ENCODE measurements at regions of chr7 and their contacts with region 1.

Region 1: DNA sequence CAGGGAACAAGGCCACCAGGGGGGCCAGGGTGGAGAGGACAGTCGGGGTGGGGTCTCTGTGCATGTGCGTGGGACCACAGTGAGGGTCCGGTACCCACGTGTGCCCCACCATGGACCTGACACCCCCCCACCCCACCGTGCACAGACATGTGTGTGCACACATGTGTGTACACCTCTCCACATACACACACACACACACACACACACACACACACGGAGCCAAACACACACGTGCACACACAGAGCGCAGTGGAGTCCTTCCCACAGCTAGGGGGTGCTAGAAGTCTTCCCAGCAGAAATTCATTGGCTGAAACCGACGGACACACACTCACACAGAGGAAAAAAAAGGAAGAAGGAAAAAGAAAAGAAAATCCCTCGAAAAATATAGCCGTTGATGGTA is 42.8 kb upstream of the GNA12 start:
- DNase-seq: no peak
- ATAC-seq: peak; percentile 88
- H3K4me3 Mint-ChIP-seq: no peak overlapping the region
- H3K27ac Mint-ChIP-seq: no peak overlapping the region
- H3K4me1 Mint-ChIP-seq: peaks cover 7% of the 10 kb centered on the region
- H3K27me3 Mint-ChIP-seq: no peaks in the 10 kb centered on the region
- CTCF ChIP-seq: no peak

Region 2: DNA sequence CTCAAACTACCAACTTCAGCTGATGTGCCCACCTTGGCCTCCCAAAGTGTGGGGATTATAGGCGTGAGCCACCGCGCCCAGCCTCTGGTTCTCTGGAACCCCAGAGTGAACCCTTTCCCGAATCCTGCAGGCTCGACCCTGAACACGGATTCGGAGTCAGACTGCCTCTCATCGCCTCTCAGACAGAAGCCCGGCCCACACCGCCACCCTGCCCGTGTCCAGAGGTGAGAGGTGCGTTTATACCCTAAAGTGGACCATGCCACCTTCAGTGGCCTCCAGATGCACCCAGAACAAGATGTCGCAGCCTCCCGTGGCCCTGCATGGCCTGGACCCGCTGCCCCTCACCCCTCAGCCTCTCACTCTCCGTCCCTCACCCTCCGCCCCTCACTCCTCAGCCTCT is 22.1 kb after region 1 on chr7:
- CTCF ChIA-PET with region 1: interaction called, 4 read pairs
- POLR2A ChIA-PET with region 1: interaction called, 10 read pairs
- intact Hi-C with region 1: no loop called
- DNase-seq: no peak
- ATAC-seq: no peak
- H3K4me3 Mint-ChIP-seq: no peak overlapping the region
- H3K27ac Mint-ChIP-seq: peak overlapping the region; percentile 66
- H3K4me1 Mint-ChIP-seq: peaks cover 5% of the 10 kb centered on the region
- H3K27me3 Mint-ChIP-seq: no peaks in the 10 kb centered on the region
- CTCF ChIP-seq: no peak

Region 3: GRCh38 chr7:2939193-2939885 is 52.4 kb after region 1 on chr7:
- CTCF ChIA-PET with region 1: no interaction called
- POLR2A ChIA-PET with region 1: interaction called, 13 read pairs
- intact Hi-C with region 1: no loop called
- DNase-seq: no peak
- ATAC-seq: no peak
- H3K4me3 Mint-ChIP-seq: no peak overlapping the region
- H3K27ac Mint-ChIP-seq: no peak overlapping the region
- H3K4me1 Mint-ChIP-seq: peaks cover 11% of the 10 kb centered on the region
- H3K27me3 Mint-ChIP-seq: no peaks in the 10 kb centered on the region
- CTCF ChIP-seq: no peak

Region 4: GRCh38 chr7:3154912-3155494 is 268.1 kb after region 1 on chr7:
- CTCF ChIA-PET with region 1: interaction called, 15 read pairs
- POLR2A ChIA-PET with region 1: no interaction called
- intact Hi-C with region 1: loop called (anchors 1 kb)
- DNase-seq: no peak
- ATAC-seq: peak; percentile 84
- H3K4me3 Mint-ChIP-seq: no peak overlapping the region
- H3K27ac Mint-ChIP-seq: no peak overlapping the region
- H3K4me1 Mint-ChIP-seq: peaks cover 36% of the 10 kb centered on the region
- H3K27me3 Mint-ChIP-seq: peaks cover 2% of the 10 kb centered on the region
- CTCF ChIP-seq: peak; percentile 47

Region 5: GRCh38 chr7:3188946-3189345 is 302.0 kb after region 1 on chr7:
- CTCF ChIA-PET with region 1: no interaction called
- POLR2A ChIA-PET with region 1: no interaction called
- intact Hi-C with region 1: no loop called
- DNase-seq: no peak
- ATAC-seq: no peak
- H3K4me3 Mint-ChIP-seq: no peak overlapping the region
- H3K27ac Mint-ChIP-seq: no peak overlapping the region
- H3K4me1 Mint-ChIP-seq: no peaks in the 10 kb centered on the region
- H3K27me3 Mint-ChIP-seq: peaks cover 7% of the 10 kb centered on the region
- CTCF ChIP-seq: no peak

Region 6: GRCh38 chr7:3200504-3200903 is 313.6 kb after region 1 on chr7:
- CTCF ChIA-PET with region 1: no interaction called
- POLR2A ChIA-PET with region 1: no interaction called
- intact Hi-C with region 1: loop called (anchors 1 kb)
- DNase-seq: no peak
- ATAC-seq: no peak
- H3K4me3 Mint-ChIP-seq: no peak overlapping the region
- H3K27ac Mint-ChIP-seq: no peak overlapping the region
- H3K4me1 Mint-ChIP-seq: peaks cover 4% of the 10 kb centered on the region
- H3K27me3 Mint-ChIP-seq: peaks cover 2% of the 10 kb centered on the region
- CTCF ChIP-seq: no peak

Region 7: GRCh38 chr7:3722396-3722922 is 835.6 kb after region 1 on chr7:
- CTCF ChIA-PET with region 1: no interaction called
- POLR2A ChIA-PET with region 1: no interaction called
- intact Hi-C with region 1: loop called (anchors 5 kb)
- DNase-seq: peak; percentile 18
- ATAC-seq: peak; percentile 64
- H3K4me3 Mint-ChIP-seq: no peak overlapping the region
- H3K27ac Mint-ChIP-seq: no peak overlapping the region
- H3K4me1 Mint-ChIP-seq: no peaks in the 10 kb centered on the region
- H3K27me3 Mint-ChIP-seq: peaks cover 2% of the 10 kb centered on the region
- CTCF ChIP-seq: no peak

Measured in activated B cell treated with CpG ODN at 0.5 μM for 24 hours (primary cell).